ENCODE measurements at regions of chr14 and their contacts with region 1.

Region 1: GRCh38 chr14:91418387-91419043 is 895 bp upstream of the CCDC88C start:
- DNase-seq: peak; percentile 73 to 93 (median 84)
- ATAC-seq: peak; percentile 32
- H3K4me3 ChIP-seq: peak overlapping the region; percentile 47 to 48
- H3K4me3 Mint-ChIP-seq: peak overlapping the region; percentile 80
- H3K27ac ChIP-seq: peak overlapping the region; percentile 19 to 60
- H3K27ac Mint-ChIP-seq: peak overlapping the region; percentile 92
- H3K4me1 ChIP-seq: peaks cover 28% of the 10 kb centered on the region
- H3K4me1 Mint-ChIP-seq: peaks cover 40% of the 10 kb centered on the region
- H3K27me3 ChIP-seq: no peaks in the 10 kb centered on the region
- H3K27me3 Mint-ChIP-seq: no peaks in the 10 kb centered on the region
- CTCF ChIP-seq: peak; percentile 93

Region 2: GRCh38 chr14:91244501-91244901 is 174.0 kb before region 1 on chr14 and contains the start of gene GPR68:
- CTCF ChIA-PET with region 1: interaction called, 4 read pairs
- POLR2A ChIA-PET with region 1: interaction called, 4 read pairs
- intact Hi-C with region 1: loop called (anchors 5 kb)
- DNase-seq: peak in 5 of 9 experiments; percentile 38 to 69 (median 48)
- ATAC-seq: no peak
- H3K4me3 ChIP-seq: peak within 1 kb of the TSS; percentile 49 to 56
- H3K4me3 Mint-ChIP-seq: peak within 1 kb of the TSS; percentile 87
- H3K27ac ChIP-seq: peak within 1 kb of the TSS; percentile 68 to 92
- H3K27ac Mint-ChIP-seq: peak within 1 kb of the TSS; percentile 94
- H3K4me1 ChIP-seq: peaks cover 64% of the 10 kb centered on the region
- H3K4me1 Mint-ChIP-seq: peaks cover 89% of the 10 kb centered on the region
- H3K27me3 ChIP-seq: no peaks in the 10 kb centered on the region
- H3K27me3 Mint-ChIP-seq: no peaks in the 10 kb centered on the region
- CTCF ChIP-seq: no peak
- total RNA-seq, gene GPR68: 3.6 to 5.1 TPM

Region 3: DNA sequence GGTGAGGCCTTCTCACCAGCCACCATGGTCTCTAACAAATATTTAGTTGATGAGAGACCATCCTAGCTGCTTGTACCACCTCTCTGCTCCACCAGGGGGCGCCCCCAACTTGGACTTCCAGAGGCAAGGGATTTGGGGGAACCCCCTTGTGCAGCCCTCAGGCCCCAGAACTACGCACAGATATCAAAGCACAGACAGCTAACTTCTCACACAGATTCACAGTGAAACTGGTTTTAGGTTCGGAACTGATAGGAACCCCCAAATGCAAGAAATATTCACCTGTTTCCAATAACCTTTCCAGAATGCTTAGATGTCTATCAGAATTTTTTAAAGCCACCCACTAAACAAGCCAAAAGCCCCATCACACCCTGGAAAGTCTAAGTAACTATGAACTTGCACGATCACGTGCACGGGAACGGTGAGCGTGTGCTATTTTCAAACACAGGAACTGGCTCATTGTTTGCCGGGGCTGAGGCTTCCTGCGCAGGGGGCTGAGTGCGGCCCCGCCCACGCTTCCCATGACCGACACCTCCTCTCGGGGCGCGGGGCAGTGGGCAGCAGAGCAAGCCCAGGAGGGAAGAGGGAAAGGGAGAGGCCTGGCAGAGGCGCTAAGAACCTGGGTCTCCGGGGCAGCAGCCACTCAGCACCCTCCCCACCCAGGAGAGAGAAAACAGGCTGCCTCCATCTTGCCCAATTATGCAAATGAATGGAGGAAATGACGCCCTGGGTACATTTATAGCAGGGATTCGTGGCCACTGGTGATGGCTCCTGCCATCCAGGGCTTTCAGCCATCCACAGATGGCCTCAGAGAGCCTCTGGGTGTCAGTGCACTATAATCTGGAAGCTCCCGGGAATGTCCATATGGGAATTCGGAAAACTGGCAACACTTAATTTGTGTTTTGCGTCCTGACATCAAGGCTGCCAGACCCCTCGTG is 94.6 kb before region 1 on chr14:
- CTCF ChIA-PET with region 1: interaction called, 136 read pairs
- POLR2A ChIA-PET with region 1: interaction called, 67 read pairs
- intact Hi-C with region 1: loop called (anchors 1 kb)
- DNase-seq: peak; percentile 89 to 98 (median 94)
- ATAC-seq: peak; percentile 77
- H3K4me3 ChIP-seq: peak overlapping the region; percentile 18 to 33
- H3K4me3 Mint-ChIP-seq: peak overlapping the region; percentile 81
- H3K27ac ChIP-seq: peak overlapping the region; percentile 65 to 95
- H3K27ac Mint-ChIP-seq: peak overlapping the region; percentile 99
- H3K4me1 ChIP-seq: peaks cover 95% of the 10 kb centered on the region
- H3K4me1 Mint-ChIP-seq: peaks cover 84% of the 10 kb centered on the region
- H3K27me3 ChIP-seq: no peaks in the 10 kb centered on the region
- H3K27me3 Mint-ChIP-seq: no peaks in the 10 kb centered on the region
- CTCF ChIP-seq: peak; percentile 89

Region 4: GRCh38 chr14:91367173-91368171 is 51.0 kb before region 1 on chr14:
- CTCF ChIA-PET with region 1: interaction called, 18 read pairs
- POLR2A ChIA-PET with region 1: interaction called, 81 read pairs
- intact Hi-C with region 1: loop called in 1 of 2 experiments (anchors 2 kb)
- DNase-seq: peak in 7 of 9 experiments; percentile 41 to 96 (median 77)
- ATAC-seq: peak; percentile 77
- H3K4me3 ChIP-seq: peak overlapping the region; percentile 18 to 42
- H3K4me3 Mint-ChIP-seq: peak overlapping the region; percentile 73
- H3K27ac ChIP-seq: peak overlapping the region; percentile 67 to 79
- H3K27ac Mint-ChIP-seq: peak overlapping the region; percentile 93
- H3K4me1 ChIP-seq: peaks cover 97% of the 10 kb centered on the region
- H3K4me1 Mint-ChIP-seq: peaks cover 86% of the 10 kb centered on the region
- H3K27me3 ChIP-seq: no peaks in the 10 kb centered on the region
- H3K27me3 Mint-ChIP-seq: no peaks in the 10 kb centered on the region
- CTCF ChIP-seq: no peak

Region 5: GRCh38 chr14:91396959-91397815 is 21.3 kb before region 1 on chr14:
- CTCF ChIA-PET with region 1: interaction called, 48 read pairs
- POLR2A ChIA-PET with region 1: interaction called, 168 read pairs
- intact Hi-C with region 1: no loop called
- DNase-seq: peak in 7 of 9 experiments; percentile 58 to 81 (median 69)
- ATAC-seq: peak; percentile 55
- H3K4me3 ChIP-seq: peak overlapping the region; percentile 29 to 41
- H3K4me3 Mint-ChIP-seq: peak overlapping the region; percentile 81
- H3K27ac ChIP-seq: peak overlapping the region; percentile 42 to 78
- H3K27ac Mint-ChIP-seq: peak overlapping the region; percentile 90
- H3K4me1 ChIP-seq: peaks cover 92% of the 10 kb centered on the region
- H3K4me1 Mint-ChIP-seq: peaks cover 89% of the 10 kb centered on the region
- H3K27me3 ChIP-seq: no peaks in the 10 kb centered on the region
- H3K27me3 Mint-ChIP-seq: no peaks in the 10 kb centered on the region
- CTCF ChIP-seq: no peak

Region 6: DNA sequence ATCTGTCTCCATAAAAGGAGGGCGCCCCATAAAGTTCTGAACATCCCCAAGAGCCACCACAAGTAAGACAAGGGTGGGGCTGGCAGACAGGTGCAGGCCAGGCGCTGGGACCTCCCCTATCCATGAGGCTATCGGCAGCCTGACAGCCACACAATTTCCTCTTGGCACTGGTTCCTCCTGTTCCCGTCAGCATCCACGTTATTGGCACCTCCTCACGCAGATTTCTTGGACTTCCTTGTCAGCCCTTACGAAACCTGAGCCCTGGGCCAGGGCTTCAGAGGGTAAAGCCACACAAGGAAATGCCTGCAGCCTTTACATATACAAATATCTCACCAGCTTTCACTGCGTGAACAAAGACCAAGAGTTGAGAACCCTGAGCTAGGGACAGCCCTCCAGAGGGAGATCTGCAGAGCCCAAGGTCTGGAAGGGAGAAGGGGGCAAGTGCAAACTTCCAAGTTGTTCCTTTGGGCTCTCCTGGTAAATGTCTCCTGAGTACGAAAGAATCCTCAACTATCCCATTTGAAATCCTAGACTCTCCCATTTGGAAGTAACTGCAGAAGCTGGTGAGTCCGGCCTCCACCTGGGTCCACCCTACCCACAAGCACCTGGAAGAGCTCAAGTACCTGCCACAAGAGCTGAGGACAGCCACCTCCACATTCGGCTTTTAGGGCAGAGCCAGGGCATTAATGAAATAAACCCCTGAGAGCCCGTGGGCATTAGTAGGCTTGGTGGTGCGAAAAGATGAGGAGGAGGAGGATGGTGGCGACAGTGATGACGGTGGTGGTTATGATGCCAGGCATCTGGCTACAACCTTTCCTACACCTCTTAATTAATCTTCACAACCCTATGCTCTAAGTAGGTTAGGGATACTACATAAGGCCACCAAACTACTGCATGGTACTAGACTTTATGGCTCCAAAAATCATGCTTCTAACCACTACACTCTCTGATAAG is 454.3 kb after region 1 on chr14:
- CTCF ChIA-PET with region 1: no interaction called
- POLR2A ChIA-PET with region 1: interaction called, 3 read pairs
- intact Hi-C with region 1: loop called in 1 of 2 experiments (anchors 10 kb)
- DNase-seq: peak in 7 of 9 experiments; percentile 51 to 87 (median 77)
- ATAC-seq: peak; percentile 37
- H3K4me3 ChIP-seq: peak overlapping the region; percentile 31 to 47
- H3K4me3 Mint-ChIP-seq: peak overlapping the region; percentile 71
- H3K27ac ChIP-seq: peak overlapping the region; percentile 83 to 86
- H3K27ac Mint-ChIP-seq: peak overlapping the region; percentile 99
- H3K4me1 ChIP-seq: peaks cover 92% of the 10 kb centered on the region
- H3K4me1 Mint-ChIP-seq: peaks cover 99% of the 10 kb centered on the region
- H3K27me3 ChIP-seq: no peaks in the 10 kb centered on the region
- H3K27me3 Mint-ChIP-seq: no peaks in the 10 kb centered on the region
- CTCF ChIP-seq: no peak

Region 7: DNA sequence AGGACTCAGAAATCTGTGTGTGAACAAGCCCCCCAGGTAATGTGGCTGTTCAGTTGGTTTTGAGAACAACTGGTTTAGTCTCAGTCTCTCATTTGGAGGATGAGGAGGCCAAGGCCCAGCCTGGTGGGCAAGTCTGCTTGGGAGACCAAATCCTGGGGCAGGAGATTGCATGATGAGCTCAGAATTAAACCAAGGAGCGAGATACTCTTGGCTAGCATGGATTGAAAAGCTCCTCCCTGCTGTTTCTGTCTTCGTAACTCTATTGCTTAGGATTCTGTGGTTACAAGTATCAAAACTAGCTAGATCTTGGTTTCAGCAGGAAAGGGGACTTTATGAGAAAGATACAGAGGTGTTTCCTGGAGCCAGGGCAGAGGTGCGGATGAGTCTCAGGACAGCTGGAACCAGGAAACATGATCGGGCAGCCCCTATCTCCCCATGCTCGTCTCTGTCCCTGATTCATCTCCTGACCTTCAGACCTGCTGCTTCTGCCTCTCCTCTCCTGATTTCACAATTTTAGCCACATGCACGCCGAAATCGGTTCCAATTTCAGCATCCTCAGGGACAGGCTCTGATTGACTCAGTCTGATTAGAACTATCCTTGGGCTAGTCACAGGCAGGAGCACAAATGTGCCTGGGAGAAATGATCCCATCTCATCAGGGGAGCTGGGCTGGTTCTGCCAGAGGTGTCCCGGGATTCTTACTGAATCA is 1054.9 kb after region 1 on chr14:
- CTCF ChIA-PET with region 1: no interaction called
- POLR2A ChIA-PET with region 1: no interaction called
- intact Hi-C with region 1: no loop called
- DNase-seq: peak in 1 of 9 experiments; percentile 35
- ATAC-seq: no peak
- H3K4me3 ChIP-seq: no peak overlapping the region
- H3K4me3 Mint-ChIP-seq: no peak overlapping the region
- H3K27ac ChIP-seq: no peak overlapping the region
- H3K27ac Mint-ChIP-seq: no peak overlapping the region
- H3K4me1 ChIP-seq: no peaks in the 10 kb centered on the region
- H3K4me1 Mint-ChIP-seq: peaks cover 13% of the 10 kb centered on the region
- H3K27me3 ChIP-seq: no peaks in the 10 kb centered on the region
- H3K27me3 Mint-ChIP-seq: no peaks in the 10 kb centered on the region
- CTCF ChIP-seq: no peak

Measured in CD8-positive, alpha-beta T cell (primary cell).